ENCODE measurements at regions of chr1 and their contacts with region 1.

Region 1: DNA sequence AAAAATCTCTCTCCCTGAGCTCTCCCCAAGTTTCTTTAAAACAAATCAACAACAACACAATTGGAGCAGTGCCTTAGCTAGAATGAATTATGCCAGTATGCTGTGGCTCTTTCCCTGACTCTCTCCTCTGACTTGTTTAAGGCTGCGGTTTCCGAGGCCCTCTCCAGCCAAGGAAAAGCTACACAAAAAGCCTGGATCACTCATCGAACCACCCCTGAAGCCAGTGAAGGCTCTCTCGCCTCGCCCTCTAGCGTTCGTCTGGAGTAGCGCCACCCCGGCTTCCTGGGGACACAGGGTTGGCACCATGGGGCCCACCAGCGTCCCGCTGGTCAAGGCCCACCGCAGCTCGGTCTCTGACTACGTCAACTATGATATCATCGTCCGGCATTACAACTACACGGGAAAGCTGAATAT is 1.9 kb downstream of the S1PR1 start:
- DNase-seq: peak; percentile 78
- ATAC-seq: peak; percentile 28
- H3K4me3 Mint-ChIP-seq: peak overlapping the region; percentile 98
- H3K27ac Mint-ChIP-seq: peak overlapping the region; percentile 98
- H3K4me1 Mint-ChIP-seq: peaks cover 70% of the 10 kb centered on the region
- H3K27me3 Mint-ChIP-seq: no peaks in the 10 kb centered on the region
- CTCF ChIP-seq: peak; percentile 58

Region 2: GRCh38 chr1:101002551-101002950 is 236.1 kb before region 1 on chr1:
- CTCF ChIA-PET with region 1: interaction called, 6 read pairs
- POLR2A ChIA-PET with region 1: interaction called, 13 read pairs
- intact Hi-C with region 1: no loop called
- DNase-seq: no peak
- ATAC-seq: peak; percentile 40
- H3K4me3 Mint-ChIP-seq: no peak overlapping the region
- H3K27ac Mint-ChIP-seq: peak overlapping the region; percentile 26
- H3K4me1 Mint-ChIP-seq: peaks cover 31% of the 10 kb centered on the region
- H3K27me3 Mint-ChIP-seq: no peaks in the 10 kb centered on the region
- CTCF ChIP-seq: no peak

Region 3: GRCh38 chr1:101128211-101128727 is 110.4 kb before region 1 on chr1:
- CTCF ChIA-PET with region 1: no interaction called
- POLR2A ChIA-PET with region 1: interaction called, 12 read pairs
- intact Hi-C with region 1: loop called (anchors 2 kb)
- DNase-seq: no peak
- ATAC-seq: peak; percentile 95
- H3K4me3 Mint-ChIP-seq: peak overlapping the region; percentile 55
- H3K27ac Mint-ChIP-seq: peak overlapping the region; percentile 87
- H3K4me1 Mint-ChIP-seq: peaks cover 62% of the 10 kb centered on the region
- H3K27me3 Mint-ChIP-seq: no peaks in the 10 kb centered on the region
- CTCF ChIP-seq: no peak

Region 4: GRCh38 chr1:101198842-101199636 is 39.6 kb before region 1 on chr1:
- CTCF ChIA-PET with region 1: interaction called, 3 read pairs
- POLR2A ChIA-PET with region 1: interaction called, 35 read pairs
- intact Hi-C with region 1: loop called (anchors 2 kb)
- DNase-seq: no peak
- ATAC-seq: peak; percentile 91
- H3K4me3 Mint-ChIP-seq: peak overlapping the region; percentile 11
- H3K27ac Mint-ChIP-seq: peak overlapping the region; percentile 9
- H3K4me1 Mint-ChIP-seq: peaks cover 16% of the 10 kb centered on the region
- H3K27me3 Mint-ChIP-seq: no peaks in the 10 kb centered on the region
- CTCF ChIP-seq: no peak

Region 5: GRCh38 chr1:101288491-101288944 is 49.8 kb after region 1 on chr1:
- CTCF ChIA-PET with region 1: interaction called, 58 read pairs
- POLR2A ChIA-PET with region 1: interaction called, 30 read pairs
- intact Hi-C with region 1: loop called (anchors 1 kb)
- DNase-seq: no peak
- ATAC-seq: peak; percentile 62
- H3K4me3 Mint-ChIP-seq: no peak overlapping the region
- H3K27ac Mint-ChIP-seq: no peak overlapping the region
- H3K4me1 Mint-ChIP-seq: peaks cover 50% of the 10 kb centered on the region
- H3K27me3 Mint-ChIP-seq: no peaks in the 10 kb centered on the region
- CTCF ChIP-seq: peak; percentile 97

Region 6: GRCh38 chr1:101357444-101357986 is 118.8 kb after region 1 on chr1:
- CTCF ChIA-PET with region 1: interaction called, 4 read pairs
- POLR2A ChIA-PET with region 1: interaction called, 6 read pairs
- intact Hi-C with region 1: loop called (anchors 1 kb)
- DNase-seq: no peak
- ATAC-seq: peak; percentile 99
- H3K4me3 Mint-ChIP-seq: no peak overlapping the region
- H3K27ac Mint-ChIP-seq: no peak overlapping the region
- H3K4me1 Mint-ChIP-seq: peaks cover 9% of the 10 kb centered on the region
- H3K27me3 Mint-ChIP-seq: no peaks in the 10 kb centered on the region
- CTCF ChIP-seq: no peak

Measured in activated B cell treated with CpG ODN at 0.5 μM for 24 hours (primary cell).